PC-9 (cell line): ENCODE measurements at regions of chr3 and their contacts with region 1.

Region 1: GRCh38 chr3:4722103-4722502 is 229.0 kb downstream of the ITPR1 start:
- DNase-seq: peak in 1 of 2 experiments; percentile 25
- H3K4me3 ChIP-seq: no peak overlapping the region
- H3K27ac ChIP-seq: no peak overlapping the region; the same call in 1 of the 2 replicates
- H3K4me1 ChIP-seq: no peaks in the 10 kb centered on the region
- H3K27me3 ChIP-seq: no peaks in the 10 kb centered on the region
- CTCF ChIP-seq: peak; percentile 39; the same call in 1 of the 2 replicates

Region 2: DNA sequence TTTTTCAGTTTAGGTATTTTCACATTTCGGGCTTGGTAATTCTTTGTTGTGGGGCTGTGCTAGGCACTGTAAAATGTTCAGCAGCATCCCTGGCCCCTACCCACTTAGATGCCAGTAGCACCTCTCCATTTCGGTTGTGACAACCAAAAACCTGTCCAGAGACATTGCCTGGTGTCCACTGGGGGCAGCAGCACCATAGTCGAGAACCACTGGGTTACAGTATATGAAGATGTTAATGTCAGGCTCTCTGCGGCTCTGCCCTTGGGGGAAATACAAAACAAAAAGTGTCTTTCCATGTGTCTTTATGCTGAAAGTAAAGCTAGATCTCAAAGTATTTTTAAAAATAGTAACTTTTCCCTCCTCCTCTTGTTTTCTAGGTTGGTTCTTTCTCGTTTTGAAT is 51.8 kb before region 1 on chr3:
- CTCF ChIA-PET with region 1: interaction called, 13 read pairs
- POLR2A ChIA-PET with region 1: no interaction called
- intact Hi-C with region 1: no loop called
- DNase-seq: no peak
- H3K4me3 ChIP-seq: no peak overlapping the region
- H3K27ac ChIP-seq: no peak overlapping the region
- H3K4me1 ChIP-seq: no peaks in the 10 kb centered on the region
- H3K27me3 ChIP-seq: no peaks in the 10 kb centered on the region
- CTCF ChIP-seq: peak; percentile 45; the same call in 1 of the 2 replicates

Region 3: DNA sequence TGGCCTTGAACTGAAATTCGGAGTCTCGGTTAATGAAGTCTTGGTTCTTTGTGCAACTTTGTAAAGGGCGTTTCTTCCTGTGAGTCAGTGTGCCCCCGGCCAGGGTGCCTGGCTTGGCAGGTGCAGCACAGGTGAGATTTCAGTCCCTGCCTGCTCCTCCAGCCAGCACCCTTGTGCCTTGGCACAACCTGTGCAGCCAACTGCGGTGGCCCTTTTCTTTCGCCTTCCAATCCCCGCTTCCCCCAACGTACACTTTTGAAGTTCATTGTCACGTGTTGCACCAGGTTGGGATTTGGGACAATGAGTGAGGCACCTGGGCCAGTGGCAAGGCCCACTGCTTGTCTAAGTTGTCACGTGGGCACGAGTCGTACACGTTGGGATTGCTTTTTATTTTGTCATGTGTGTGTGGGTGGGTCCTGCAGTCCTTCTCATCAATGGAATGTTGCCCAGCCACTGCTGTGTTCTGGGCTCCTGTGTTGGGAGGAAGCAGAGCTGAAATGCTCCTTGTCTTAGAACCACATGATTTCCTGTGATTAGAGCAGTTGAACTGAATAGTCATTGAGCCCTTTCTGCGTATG is 14.3 kb after region 1 on chr3:
- CTCF ChIA-PET with region 1: no interaction called
- POLR2A ChIA-PET with region 1: interaction called, 8 read pairs
- intact Hi-C with region 1: loop called (anchors 2 kb)
- DNase-seq: peak; percentile 86 to 92
- H3K4me3 ChIP-seq: peak overlapping the region; percentile 18; the same call in 1 of the 2 replicates
- H3K27ac ChIP-seq: peak overlapping the region; percentile 92
- H3K4me1 ChIP-seq: peaks cover 45% of the 10 kb centered on the region
- H3K27me3 ChIP-seq: no peaks in the 10 kb centered on the region
- CTCF ChIP-seq: no peak

Region 4: GRCh38 chr3:4831580-4831950 is 109.5 kb after region 1 on chr3:
- CTCF ChIA-PET with region 1: interaction called, 5 read pairs
- POLR2A ChIA-PET with region 1: no interaction called
- intact Hi-C with region 1: loop called (anchors 1 kb)
- DNase-seq: no peak
- H3K4me3 ChIP-seq: peak overlapping the region; percentile 47; the same call in 1 of the 2 replicates
- H3K27ac ChIP-seq: peak overlapping the region; percentile 96
- H3K4me1 ChIP-seq: peaks cover 57% of the 10 kb centered on the region
- H3K27me3 ChIP-seq: no peaks in the 10 kb centered on the region
- CTCF ChIP-seq: no peak

Region 5: GRCh38 chr3:4888913-4889846 is 167.1 kb after region 1 on chr3:
- CTCF ChIA-PET with region 1: no interaction called
- POLR2A ChIA-PET with region 1: no interaction called
- intact Hi-C with region 1: loop called (anchors 5 kb)
- DNase-seq: no peak
- H3K4me3 ChIP-seq: no peak overlapping the region
- H3K27ac ChIP-seq: no peak overlapping the region
- H3K4me1 ChIP-seq: no peaks in the 10 kb centered on the region
- H3K27me3 ChIP-seq: no peaks in the 10 kb centered on the region
- CTCF ChIP-seq: no peak

Region 6: GRCh38 chr3:5026331-5027218 is 304.5 kb after region 1 on chr3:
- CTCF ChIA-PET with region 1: interaction called, 3 read pairs
- POLR2A ChIA-PET with region 1: no interaction called
- intact Hi-C with region 1: loop called (anchors 1 kb)
- DNase-seq: peak; percentile 64 to 87
- H3K4me3 ChIP-seq: peak overlapping the region; percentile 48; the same call in 1 of the 2 replicates
- H3K27ac ChIP-seq: peak overlapping the region; percentile 73
- H3K4me1 ChIP-seq: peaks cover 33% of the 10 kb centered on the region
- H3K27me3 ChIP-seq: no peaks in the 10 kb centered on the region
- CTCF ChIP-seq: peak; percentile 61